Cardiac septum (tissue), 1 donor: ENCODE measurements at regions of chr18 and their contacts with region 1.

Region 1: DNA sequence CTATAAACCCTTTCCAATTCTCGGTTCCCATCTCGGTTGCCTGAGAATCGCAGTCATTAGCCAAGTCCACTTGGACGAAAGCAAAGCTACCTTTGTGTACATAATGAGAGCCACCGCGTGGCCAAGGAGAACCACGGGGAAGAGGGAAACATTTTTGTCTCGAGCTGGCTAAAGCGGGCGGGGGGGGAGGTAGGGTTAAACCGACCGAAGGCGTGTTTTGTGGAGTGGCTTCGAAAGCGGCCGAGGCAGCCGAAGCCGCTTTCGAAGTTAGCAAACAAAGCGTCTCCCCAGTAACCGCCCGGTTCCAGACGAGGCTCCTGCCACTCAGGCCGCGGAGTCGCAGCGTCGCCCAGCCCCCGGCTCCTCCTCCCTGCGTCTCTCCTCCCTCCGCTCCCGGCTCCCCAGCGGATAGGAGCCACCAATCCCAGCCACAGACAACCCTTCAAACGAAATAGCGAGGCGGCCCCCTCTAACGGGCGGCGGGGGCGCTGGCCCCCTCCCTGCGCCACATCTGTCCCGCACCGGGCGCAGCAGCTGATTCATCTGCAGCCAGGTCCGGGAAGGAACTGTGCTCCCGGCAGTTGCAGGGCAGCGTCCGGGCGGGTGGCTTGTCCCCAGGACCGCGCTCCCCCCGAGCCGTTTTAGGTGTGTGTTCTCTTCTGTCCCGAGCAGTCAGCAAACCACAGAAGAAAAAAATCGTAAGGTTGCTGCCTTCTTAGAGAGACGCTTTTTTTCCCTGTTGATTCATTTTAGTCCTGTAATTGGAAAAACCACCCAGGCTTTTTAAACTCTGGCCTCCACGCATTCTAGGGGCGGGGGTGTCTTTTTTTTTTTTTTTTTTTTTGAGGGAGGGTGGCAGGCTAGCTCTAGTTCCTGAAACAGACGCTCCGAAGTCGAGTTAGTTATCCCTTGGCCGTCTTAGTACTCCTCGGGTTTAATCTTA is 1.8 kb upstream of the TGIF1 start:
- DNase-seq: peak; percentile 96

Region 2: GRCh38 chr18:2971741-2972552 is 476.2 kb before region 1 on chr18:
- intact Hi-C with region 1: loop called (anchors 10 kb)
- DNase-seq: peak; percentile 84

Region 3: DNA sequence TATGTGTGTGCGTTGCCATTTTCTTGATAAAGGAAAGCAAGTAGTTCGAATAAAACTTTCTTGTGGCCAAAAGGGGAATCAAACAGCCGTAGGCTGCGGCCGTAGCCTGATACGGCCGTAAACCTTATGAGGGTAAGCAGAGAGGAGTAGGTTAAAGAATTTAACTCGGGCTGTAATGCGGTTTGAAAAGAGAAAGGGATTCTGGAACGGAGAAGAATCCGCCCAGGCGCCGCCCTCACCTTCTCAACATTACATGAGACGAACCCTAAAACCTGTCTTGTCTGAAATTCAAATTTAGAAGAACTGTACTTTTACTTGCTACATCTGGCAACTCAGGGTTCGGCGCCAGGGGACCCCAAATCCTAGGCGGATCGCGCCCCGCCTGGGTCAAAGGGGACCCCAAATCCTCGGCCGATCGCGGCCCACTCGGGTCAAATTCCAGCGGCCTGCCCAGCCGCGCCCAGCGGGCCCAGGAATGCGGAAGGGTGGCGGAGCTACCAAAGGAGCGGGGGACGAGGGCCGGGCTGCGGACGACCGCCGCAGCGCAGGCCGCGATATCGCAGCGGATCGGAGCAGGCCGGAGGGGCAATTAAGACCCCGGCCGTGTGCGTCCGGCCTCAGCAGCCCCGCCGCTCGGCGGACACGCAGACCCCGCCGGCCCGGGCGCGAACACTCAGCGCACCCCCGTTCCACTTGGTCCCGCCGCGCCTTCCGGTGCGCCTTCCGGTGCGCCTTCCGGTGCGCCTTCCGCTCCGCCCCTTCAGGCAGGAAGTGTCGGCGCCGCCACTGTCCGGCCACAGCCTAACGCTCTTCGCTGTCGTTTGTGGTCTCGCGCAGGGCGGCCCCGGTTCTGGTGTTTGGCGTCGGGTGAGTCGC is 186.6 kb before region 1 on chr18 and contains the start of gene MYL12B:
- intact Hi-C with region 1: loop called (anchors 5 kb)
- DNase-seq: peak; percentile 93
- total RNA-seq, gene MYL12B: 228 TPM

Region 4: GRCh38 chr18:3350566-3351527 is 97.3 kb before region 1 on chr18:
- intact Hi-C with region 1: no loop called
- DNase-seq: no peak

Region 5: DNA sequence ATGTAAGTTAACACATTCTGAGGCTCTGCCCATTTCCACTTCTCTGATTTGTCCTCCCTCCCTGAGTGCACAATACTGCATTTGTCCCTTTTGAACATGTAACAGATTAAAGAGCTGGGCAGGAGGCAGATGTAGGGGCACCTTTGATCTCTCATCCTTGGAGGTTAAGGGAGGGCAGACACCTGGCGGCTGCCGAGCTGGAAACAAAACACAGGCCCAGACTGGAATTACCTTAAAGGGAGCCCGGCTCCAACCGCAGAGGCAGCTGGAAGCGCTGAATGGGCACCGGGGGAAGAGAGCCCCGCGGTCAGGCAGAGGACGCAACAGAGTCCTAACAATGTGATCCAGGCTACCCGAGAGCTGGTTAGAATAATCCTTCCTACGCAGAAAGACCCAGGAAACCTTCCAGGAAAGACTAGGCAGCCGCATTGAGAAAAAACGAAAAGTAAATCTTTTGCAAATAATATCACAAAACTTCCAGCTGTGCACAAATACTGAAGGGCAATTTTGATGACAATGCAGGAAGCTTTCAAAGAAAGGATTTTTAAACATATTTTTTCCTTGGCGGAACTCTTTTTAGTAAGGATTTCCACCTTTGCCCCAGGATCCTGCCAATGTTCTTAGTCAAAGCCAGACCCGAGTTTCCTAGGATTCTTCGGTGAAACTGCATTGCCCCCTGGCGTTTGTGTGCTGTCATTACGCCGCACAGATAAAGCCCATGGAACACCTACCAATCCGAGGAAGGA is 217.8 kb after region 1 on chr18:
- intact Hi-C with region 1: loop called (anchors 5 kb)
- DNase-seq: peak; percentile 85